ENCODE measurements at regions of chr1 and their contacts with region 1.

Region 1: DNA sequence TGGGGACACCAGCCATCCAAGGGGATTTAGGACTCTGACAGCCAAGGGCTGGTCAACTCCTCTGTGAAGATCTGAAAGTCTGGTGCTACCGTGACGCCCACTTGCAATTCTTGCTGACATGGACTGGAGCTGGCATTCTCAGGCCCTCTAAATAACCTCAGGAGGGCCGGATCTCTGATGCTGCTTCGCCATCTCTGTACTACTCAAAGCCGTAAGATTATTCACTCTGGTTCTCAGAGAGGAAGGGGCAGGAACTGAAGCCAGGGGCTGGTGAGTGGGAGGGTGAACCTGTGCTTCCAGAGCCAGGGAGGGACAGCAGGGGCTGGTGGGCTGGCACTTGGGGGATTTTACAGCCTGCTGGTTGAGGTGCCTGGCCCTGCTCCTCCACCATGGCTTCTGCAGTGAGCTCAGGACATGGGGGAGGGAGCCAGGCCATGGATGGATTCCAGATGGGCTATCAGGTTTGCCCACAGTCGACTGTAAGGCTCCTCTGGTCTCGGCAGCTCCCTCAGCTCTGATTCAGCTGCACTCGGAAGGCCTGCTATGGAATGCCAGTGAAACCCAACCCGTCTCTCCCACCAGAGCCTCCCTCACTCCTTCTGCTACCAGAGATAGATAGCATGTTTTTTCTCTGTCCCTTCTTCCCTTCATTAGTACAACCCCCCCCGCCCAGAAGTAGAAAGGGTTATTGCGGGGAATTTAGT is 84.5 kb downstream of the PLXNA2 start:
- DNase-seq: peak; percentile 88 to 95
- ATAC-seq: peak; percentile 68 to 77
- H3K4me3 ChIP-seq: peak overlapping the region in 1 of 4 donors; percentile 7
- H3K27ac ChIP-seq: peak overlapping the region; percentile 83 to 90 (median 88)
- H3K4me1 ChIP-seq: peaks cover 87 to 90% of the 10 kb centered on the region in 2 donors
- H3K27me3 ChIP-seq: no peaks in the 10 kb centered on the region
- CTCF ChIP-seq: no peak
- POLR2A ChIP-seq: no peak

Region 2: DNA sequence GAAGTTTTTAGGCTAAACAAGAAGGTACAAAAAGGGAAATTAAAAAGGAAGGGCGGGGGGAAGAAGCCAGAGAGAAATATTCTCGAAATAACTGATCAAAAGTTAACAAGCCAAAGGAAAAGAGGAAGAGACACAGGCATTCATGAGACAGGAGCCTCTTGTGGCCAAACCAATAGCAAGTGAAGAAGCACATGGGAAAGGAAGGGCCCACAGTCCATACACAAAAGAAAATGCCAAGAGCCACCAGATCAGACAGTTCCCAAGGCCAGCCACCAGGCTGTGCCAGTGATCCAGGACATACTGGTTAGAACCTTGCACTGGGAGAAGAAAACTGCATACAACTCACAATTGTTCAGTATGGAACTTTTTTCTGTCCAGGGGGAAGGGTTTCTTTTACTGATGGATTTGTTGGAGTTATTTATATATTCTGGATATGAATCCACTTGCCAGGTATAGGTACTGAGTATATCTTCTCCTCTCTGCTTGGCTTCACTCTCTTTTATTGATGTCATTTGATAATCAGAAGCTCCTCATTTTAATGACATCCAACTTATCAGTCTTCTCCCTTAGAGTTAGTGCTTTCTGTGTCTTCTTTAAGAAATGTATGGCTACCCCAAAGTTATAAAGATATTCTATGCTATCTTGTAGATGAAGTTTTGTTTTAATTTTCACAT is 331.1 kb before region 1 on chr1:
- in situ Hi-C with region 1: no loop called
- intact Hi-C with region 1: loop called (anchors 5 kb)
- DNase-seq: peak; percentile 78 to 90
- ATAC-seq: peak; percentile 30 to 36
- H3K4me3 ChIP-seq: no peak overlapping the region
- H3K27ac ChIP-seq: peak overlapping the region; percentile 96 to 100 (median 99)
- H3K4me1 ChIP-seq: peaks cover 78 to 94% of the 10 kb centered on the region in 2 donors
- H3K27me3 ChIP-seq: no peaks in the 10 kb centered on the region
- CTCF ChIP-seq: peak; percentile 90 to 98 (median 93)
- POLR2A ChIP-seq: no peak

Region 3: DNA sequence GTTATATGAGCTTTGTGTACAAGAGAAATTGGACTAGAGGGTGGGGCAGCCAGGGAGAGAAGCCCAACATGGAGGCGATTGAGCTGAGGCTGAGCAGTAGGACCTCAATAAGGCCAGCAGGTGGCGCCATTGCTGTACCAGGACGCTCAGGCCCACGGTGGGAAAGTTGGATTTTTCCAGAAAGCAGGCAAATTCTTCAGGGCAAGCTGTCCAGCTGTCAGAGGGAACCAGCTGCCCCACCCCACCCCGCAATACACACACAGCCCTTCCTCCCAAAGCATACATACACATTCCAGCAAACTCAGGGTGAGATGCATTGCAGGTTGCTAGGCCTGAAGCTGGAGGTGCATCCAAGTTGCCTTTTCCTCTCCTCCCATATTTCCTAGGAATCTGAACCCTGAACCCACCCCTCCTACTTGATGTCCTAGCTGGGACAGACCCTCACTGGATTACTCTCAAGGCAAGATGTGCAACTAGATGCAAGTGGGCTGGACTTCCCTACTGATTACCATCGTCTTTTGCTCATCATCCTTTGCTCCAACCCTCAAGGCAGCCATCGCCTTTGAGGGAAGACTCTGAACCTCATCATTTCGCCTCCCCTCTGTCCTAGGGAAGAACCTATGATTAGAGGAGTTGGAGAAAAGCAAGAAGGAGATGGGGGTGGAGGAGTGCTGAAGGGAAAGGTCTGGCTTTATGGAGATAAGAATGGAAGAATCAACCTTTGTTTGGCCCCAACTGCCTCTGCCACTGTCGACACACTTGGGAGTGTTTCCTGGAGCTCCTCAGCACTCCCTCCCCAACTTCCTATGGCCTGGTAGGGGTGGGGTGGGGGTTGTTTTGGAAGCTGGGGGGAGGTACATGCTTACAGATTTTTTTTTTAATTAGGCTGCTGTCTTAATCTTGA is 274.3 kb before region 1 on chr1:
- in situ Hi-C with region 1: no loop called
- intact Hi-C with region 1: loop called (anchors 5 kb)
- DNase-seq: peak; percentile 72 to 76
- ATAC-seq: peak; percentile 83 to 89
- H3K4me3 ChIP-seq: no peak overlapping the region
- H3K27ac ChIP-seq: peak overlapping the region; percentile 21 to 81 (median 74)
- H3K4me1 ChIP-seq: peaks cover 42 to 55% of the 10 kb centered on the region in 2 donors
- H3K27me3 ChIP-seq: no peaks in the 10 kb centered on the region
- CTCF ChIP-seq: peak; percentile 95 to 98 (median 97)
- POLR2A ChIP-seq: no peak

Region 4: GRCh38 chr1:207963427-207964194 is 196.1 kb before region 1 on chr1:
- in situ Hi-C with region 1: no loop called
- intact Hi-C with region 1: loop called (anchors 5 kb)
- DNase-seq: peak; percentile 71 to 87
- ATAC-seq: peak; percentile 53 to 68
- H3K4me3 ChIP-seq: peak overlapping the region; percentile 61 to 95 (median 67)
- H3K27ac ChIP-seq: peak overlapping the region; percentile 86 to 97 (median 94)
- H3K4me1 ChIP-seq: peaks cover 34 to 47% of the 10 kb centered on the region in 2 donors
- H3K27me3 ChIP-seq: no peaks in the 10 kb centered on the region
- CTCF ChIP-seq: peak; percentile 92 to 100 (median 100)
- POLR2A ChIP-seq: peak; percentile 70 to 75

Region 5: DNA sequence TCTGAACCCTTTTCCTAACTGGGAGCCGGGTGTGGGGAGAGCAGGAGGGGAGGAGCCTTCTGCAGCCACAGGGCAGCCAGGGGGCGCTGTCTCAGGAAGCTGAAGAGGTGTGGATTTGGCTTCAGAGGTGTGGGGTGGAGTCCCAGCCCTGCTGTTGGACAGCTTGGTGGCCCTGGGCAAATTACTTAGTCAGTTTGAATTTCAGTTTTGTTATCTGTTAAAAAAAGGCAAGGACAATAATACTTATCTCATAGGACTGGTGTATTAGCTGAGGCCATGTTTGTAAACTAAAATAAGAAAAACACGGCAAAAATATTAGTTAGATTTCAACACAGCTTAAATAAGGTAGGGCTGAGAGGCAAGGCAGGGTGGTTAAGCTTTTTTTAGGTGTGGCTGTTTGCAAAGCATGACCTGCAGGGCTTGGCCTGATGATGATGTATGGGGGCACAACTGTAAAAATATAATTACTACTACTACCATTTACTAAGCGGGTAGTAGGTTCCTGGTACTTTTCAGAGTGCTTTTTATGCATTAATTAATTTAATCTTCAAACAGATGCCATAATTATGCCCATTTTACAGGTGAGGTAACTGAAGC is 27.3 kb before region 1 on chr1:
- in situ Hi-C with region 1: no loop called
- intact Hi-C with region 1: loop called (anchors 1 kb)
- DNase-seq: peak; percentile 68 to 84
- ATAC-seq: peak; percentile 80 to 83
- H3K4me3 ChIP-seq: no peak overlapping the region
- H3K27ac ChIP-seq: peak overlapping the region; percentile 49 to 86 (median 80)
- H3K4me1 ChIP-seq: peaks cover 65 to 67% of the 10 kb centered on the region in 2 donors
- H3K27me3 ChIP-seq: no peaks in the 10 kb centered on the region
- CTCF ChIP-seq: peak; percentile 89 to 93 (median 92)
- POLR2A ChIP-seq: no peak

Region 6: DNA sequence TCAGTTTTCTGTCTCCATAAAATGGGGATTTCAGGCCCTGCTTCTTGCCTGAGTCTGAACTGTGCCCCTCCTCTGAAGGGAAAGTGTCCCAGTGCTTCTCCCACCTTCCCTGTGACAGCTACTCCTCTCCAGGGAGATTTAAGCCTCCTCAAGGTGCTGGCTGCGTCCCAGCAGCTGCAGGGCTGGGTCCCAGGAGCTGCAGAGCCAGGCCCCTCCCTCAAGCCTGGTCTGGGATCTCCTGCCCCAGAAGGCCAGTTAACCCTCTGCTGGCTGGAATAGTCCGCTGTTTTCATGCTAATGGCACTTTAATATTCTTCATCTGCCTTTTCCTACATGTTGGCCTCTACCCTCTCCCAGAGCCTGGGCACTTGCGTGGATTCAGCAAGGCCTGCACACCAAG is 14.5 kb before region 1 on chr1:
- in situ Hi-C with region 1: no loop called
- intact Hi-C with region 1: no loop called
- DNase-seq: no peak
- ATAC-seq: no peak
- H3K4me3 ChIP-seq: no peak overlapping the region
- H3K27ac ChIP-seq: peak overlapping the region in 1 of 4 donors; percentile 33
- H3K4me1 ChIP-seq: peaks cover 48 to 62% of the 10 kb centered on the region in 2 donors
- H3K27me3 ChIP-seq: no peaks in the 10 kb centered on the region
- CTCF ChIP-seq: no peak
- POLR2A ChIP-seq: no peak

Region 7: GRCh38 chr1:208203127-208203847 is 43.6 kb after region 1 on chr1:
- in situ Hi-C with region 1: no loop called
- intact Hi-C with region 1: loop called (anchors 5 kb)
- DNase-seq: no peak
- ATAC-seq: peak in 1 of 2 donors; percentile 22
- H3K4me3 ChIP-seq: no peak overlapping the region
- H3K27ac ChIP-seq: peak overlapping the region; percentile 66 to 76 (median 70)
- H3K4me1 ChIP-seq: peaks cover 50 to 53% of the 10 kb centered on the region in 2 donors
- H3K27me3 ChIP-seq: no peaks in the 10 kb centered on the region
- CTCF ChIP-seq: no peak
- POLR2A ChIP-seq: no peak

Region 8: DNA sequence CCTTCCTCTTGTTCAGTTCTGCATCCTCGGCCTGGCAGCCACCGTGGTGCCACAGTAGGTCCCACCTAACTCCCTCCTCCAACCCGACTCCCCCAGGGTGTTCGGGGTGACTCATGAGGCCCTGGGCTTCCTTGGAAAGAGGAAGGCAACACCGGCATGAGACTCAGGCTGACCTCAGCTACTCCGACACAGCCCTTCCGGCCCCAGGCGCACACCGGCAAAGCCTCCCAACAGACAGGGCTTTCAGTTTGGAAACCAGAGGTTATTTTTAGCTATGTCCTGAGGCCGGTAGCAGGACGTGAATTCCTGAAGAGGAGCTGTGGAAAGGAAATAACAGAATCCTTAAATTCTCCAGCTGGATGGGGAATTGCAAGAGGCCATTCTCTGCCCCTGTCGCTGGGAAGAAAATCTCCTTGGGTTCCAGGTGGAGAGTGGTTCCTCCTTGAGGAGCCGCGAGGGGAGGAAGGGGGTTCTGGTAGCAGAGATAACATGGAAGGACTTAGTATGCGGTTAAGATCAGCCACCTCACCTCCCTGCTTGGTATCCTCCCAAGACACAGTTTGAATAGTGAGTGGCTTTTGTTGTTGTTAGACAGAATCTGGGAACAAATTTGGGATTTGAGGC is 60.1 kb after region 1 on chr1:
- in situ Hi-C with region 1: no loop called
- intact Hi-C with region 1: loop called (anchors 1 kb)
- DNase-seq: peak; percentile 66 to 87
- ATAC-seq: peak; percentile 83 to 87
- H3K4me3 ChIP-seq: peak overlapping the region in 2 of 4 donors; percentile 10 to 30
- H3K27ac ChIP-seq: peak overlapping the region; percentile 81 to 86 (median 84)
- H3K4me1 ChIP-seq: peaks cover 60% of the 10 kb centered on the region in 2 donors
- H3K27me3 ChIP-seq: no peaks in the 10 kb centered on the region
- CTCF ChIP-seq: no peak
- POLR2A ChIP-seq: peak; percentile 20 to 38

Measured in gastrocnemius medialis (tissue), 4 donors.